Heart left ventricle (tissue), 16 donors: ENCODE measurements at regions of chr16 and their contacts with region 1.

Region 1: DNA sequence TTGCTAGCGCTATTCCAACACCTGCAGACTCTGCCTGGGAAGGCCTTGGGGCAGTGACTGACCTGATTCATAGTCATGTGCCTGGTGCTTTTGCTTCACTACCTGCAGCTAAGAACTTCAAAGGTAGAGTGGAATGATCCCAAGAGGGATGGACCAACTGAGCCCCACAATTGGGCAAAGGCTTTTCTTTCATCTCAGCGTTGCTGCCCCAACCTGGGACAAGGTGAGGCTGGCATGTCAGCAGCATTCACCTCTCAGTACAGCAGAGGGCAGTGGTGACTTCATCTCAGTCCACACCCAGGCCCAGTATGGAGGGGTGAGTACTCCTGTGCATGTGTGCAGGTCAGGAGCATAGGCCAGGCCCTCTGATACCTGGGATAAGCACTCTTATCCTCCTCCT is 149.6 kb upstream of the GNAO1 start:
- DNase-seq: peak in 4 of 5 donors; percentile 22 to 37 (median 30)
- ATAC-seq: peak; percentile 69 to 93 (median 92)
- H3K4me3 ChIP-seq: no peak overlapping the region
- H3K27ac ChIP-seq: no peak overlapping the region
- H3K4me1 ChIP-seq: peaks cover 0 to under 1% (median 0%) of the 10 kb centered on the region in 12 donors
- H3K27me3 ChIP-seq: no peaks in the 10 kb centered on the region
- CTCF ChIP-seq: peak in 11 of 12 donors; percentile 32 to 57 (median 46)
- POLR2A ChIP-seq: no peak

Region 2: GRCh38 chr16:55944377-55944802 is 97.3 kb before region 1 on chr16:
- intact Hi-C with region 1: loop called in 1 of 10 experiments (anchors 10 kb)
- DNase-seq: peak; percentile 59 to 77 (median 71)
- ATAC-seq: peak; percentile 80 to 95 (median 89)
- H3K4me3 ChIP-seq: no peak overlapping the region
- H3K27ac ChIP-seq: peak overlapping the region in 1 of 12 donors; percentile 14
- H3K4me1 ChIP-seq: peaks cover 0 to 6% (median 0%) of the 10 kb centered on the region in 12 donors
- H3K27me3 ChIP-seq: peaks cover 0 to 5% (median 0%) of the 10 kb centered on the region in 9 donors
- CTCF ChIP-seq: peak; percentile 85 to 96 (median 92)
- POLR2A ChIP-seq: no peak

Region 3: GRCh38 chr16:55955845-55956244 is 85.8 kb before region 1 on chr16:
- intact Hi-C with region 1: loop called in 1 of 10 experiments (anchors 10 kb)
- DNase-seq: peak; percentile 50 to 93 (median 72)
- ATAC-seq: peak; percentile 96 to 99 (median 96)
- H3K4me3 ChIP-seq: no peak overlapping the region
- H3K27ac ChIP-seq: peak overlapping the region in 4 of 12 donors; percentile 19 to 76 (median 58)
- H3K4me1 ChIP-seq: peaks cover 0 to 16% (median 3%) of the 10 kb centered on the region in 12 donors
- H3K27me3 ChIP-seq: no peaks in the 10 kb centered on the region
- CTCF ChIP-seq: no peak
- POLR2A ChIP-seq: no peak

Region 4: GRCh38 chr16:56125922-56126321 is 84.2 kb after region 1 on chr16:
- intact Hi-C with region 1: no loop called
- DNase-seq: no peak
- ATAC-seq: peak in 2 of 4 donors; percentile 39 to 46
- H3K4me3 ChIP-seq: no peak overlapping the region
- H3K27ac ChIP-seq: no peak overlapping the region
- H3K4me1 ChIP-seq: peaks cover 0 to 4% (median 0%) of the 10 kb centered on the region in 12 donors
- H3K27me3 ChIP-seq: peaks cover 0 to 2% (median 0%) of the 10 kb centered on the region in 9 donors
- CTCF ChIP-seq: no peak
- POLR2A ChIP-seq: no peak

Region 5: GRCh38 chr16:56534847-56535383 is 493.2 kb after region 1 on chr16:
- intact Hi-C with region 1: no loop called
- DNase-seq: no peak
- ATAC-seq: no peak
- H3K4me3 ChIP-seq: no peak overlapping the region
- H3K27ac ChIP-seq: no peak overlapping the region
- H3K4me1 ChIP-seq: no peaks in the 10 kb centered on the region
- H3K27me3 ChIP-seq: peaks cover 0 to 31% (median 4%) of the 10 kb centered on the region in 9 donors
- CTCF ChIP-seq: no peak
- POLR2A ChIP-seq: no peak